Activated B cell treated with CpG ODN at 0.5 μM for 24 hours (primary cell): ENCODE measurements at regions of chr7 and their contacts with region 1.

Region 1: DNA sequence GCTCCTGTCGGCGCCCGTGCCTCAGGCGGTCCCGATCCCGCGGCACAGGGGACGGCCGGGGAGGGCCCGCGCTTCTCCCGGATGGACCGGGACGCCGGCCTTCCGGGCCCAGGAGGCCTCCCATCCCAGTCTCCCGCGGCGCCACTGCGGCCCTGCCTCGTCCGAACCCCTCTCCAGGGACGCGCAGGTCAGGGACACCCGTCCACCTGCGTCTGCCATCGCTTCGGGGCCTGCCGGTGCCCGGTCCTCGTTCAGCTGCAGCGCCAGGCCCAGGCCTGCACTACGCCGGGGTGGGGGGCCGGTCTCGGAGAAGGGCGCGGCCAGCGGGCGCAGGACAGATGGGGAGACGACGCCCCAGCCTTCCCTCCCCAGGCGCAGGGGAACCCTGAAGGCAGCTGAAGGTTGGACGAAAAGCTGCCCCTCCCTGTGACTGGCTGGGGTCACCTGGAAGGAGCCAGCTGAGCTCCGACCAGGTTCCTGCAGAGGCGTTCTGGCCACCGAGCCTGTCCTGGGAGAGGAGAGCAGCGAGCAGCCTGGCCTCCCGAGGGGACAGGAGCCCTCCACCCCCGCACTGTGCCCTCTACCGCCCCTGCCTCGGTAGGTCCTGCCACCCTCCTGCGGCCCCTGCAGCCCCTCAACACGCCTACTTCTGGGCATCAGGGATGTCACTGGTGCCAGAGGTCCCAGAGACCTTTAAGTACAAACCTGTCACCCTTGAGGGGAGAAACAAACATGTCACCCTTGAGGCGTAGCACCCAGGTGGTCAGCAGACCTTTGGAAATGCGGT is 84.3 kb downstream of the LANCL2 start:
- DNase-seq: no peak
- ATAC-seq: no peak
- H3K4me3 Mint-ChIP-seq: no peak overlapping the region
- H3K27ac Mint-ChIP-seq: no peak overlapping the region
- H3K4me1 Mint-ChIP-seq: peaks cover 8% of the 10 kb centered on the region
- H3K27me3 Mint-ChIP-seq: no peaks in the 10 kb centered on the region
- CTCF ChIP-seq: no peak

Region 2: GRCh38 chr7:55223023-55223422 is 226.4 kb before region 1 on chr7:
- CTCF ChIA-PET with region 1: no interaction called
- POLR2A ChIA-PET with region 1: no interaction called
- intact Hi-C with region 1: no loop called
- DNase-seq: no peak
- ATAC-seq: no peak
- H3K4me3 Mint-ChIP-seq: no peak overlapping the region
- H3K27ac Mint-ChIP-seq: no peak overlapping the region
- H3K4me1 Mint-ChIP-seq: no peaks in the 10 kb centered on the region
- H3K27me3 Mint-ChIP-seq: no peaks in the 10 kb centered on the region
- CTCF ChIP-seq: no peak

Region 3: GRCh38 chr7:55469271-55469681 is 19.9 kb after region 1 on chr7:
- CTCF ChIA-PET with region 1: no interaction called
- POLR2A ChIA-PET with region 1: no interaction called
- intact Hi-C with region 1: no loop called
- DNase-seq: no peak
- ATAC-seq: peak; percentile 41
- H3K4me3 Mint-ChIP-seq: no peak overlapping the region
- H3K27ac Mint-ChIP-seq: peak overlapping the region; percentile 21
- H3K4me1 Mint-ChIP-seq: peaks cover 24% of the 10 kb centered on the region
- H3K27me3 Mint-ChIP-seq: no peaks in the 10 kb centered on the region
- CTCF ChIP-seq: no peak

Region 4: DNA sequence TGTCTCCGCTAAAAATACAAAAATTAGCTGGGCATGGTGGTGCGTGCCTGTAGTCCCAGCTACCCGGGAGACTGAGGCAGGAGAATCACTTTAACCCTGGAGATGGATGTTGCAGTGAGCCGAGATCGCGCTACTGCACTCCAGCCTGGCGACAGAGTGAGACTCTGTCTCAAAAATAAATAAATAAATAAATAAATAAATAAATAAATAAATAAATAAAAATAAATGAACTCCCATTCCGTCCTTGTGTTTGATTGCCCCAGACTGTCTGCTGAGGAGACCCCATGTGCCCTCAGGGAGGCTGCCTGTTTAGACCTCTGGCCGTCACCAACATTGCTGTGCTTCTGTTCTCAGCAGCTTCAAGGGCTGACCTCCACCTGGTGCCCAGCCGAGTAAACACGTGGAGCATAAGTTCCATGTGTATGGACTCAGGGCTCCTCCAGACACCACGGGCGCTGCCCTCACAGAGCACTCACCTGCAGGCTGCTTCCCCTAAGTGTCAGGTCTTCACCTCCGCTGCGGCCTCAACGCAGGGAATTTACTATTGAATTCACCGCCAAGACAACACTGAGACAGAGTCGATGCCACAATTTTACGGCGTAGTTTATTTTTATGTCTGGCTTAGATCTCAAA is 90.9 kb after region 1 on chr7:
- CTCF ChIA-PET with region 1: no interaction called
- POLR2A ChIA-PET with region 1: no interaction called
- intact Hi-C with region 1: no loop called
- DNase-seq: no peak
- ATAC-seq: no peak
- H3K4me3 Mint-ChIP-seq: peak overlapping the region; percentile 55
- H3K27ac Mint-ChIP-seq: peak overlapping the region; percentile 75
- H3K4me1 Mint-ChIP-seq: peaks cover 87% of the 10 kb centered on the region
- H3K27me3 Mint-ChIP-seq: no peaks in the 10 kb centered on the region
- CTCF ChIP-seq: no peak

Region 5: DNA sequence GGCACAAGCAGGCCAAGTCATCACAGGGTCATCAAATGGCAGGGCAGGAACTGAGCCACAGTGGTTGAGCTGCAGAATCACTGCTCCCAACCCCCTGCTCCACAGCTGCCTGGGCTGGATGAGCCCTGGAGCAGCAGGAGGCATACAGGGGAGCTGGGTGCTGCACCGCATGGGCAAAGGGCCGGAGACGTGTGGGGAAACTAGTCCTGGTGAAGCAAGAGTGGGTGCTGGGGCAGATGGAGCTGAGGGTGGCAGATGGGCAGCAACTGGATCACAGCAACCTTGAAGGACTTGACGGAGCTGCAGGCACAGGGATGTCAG is 138.9 kb after region 1 on chr7:
- CTCF ChIA-PET with region 1: no interaction called
- POLR2A ChIA-PET with region 1: no interaction called
- intact Hi-C with region 1: loop called (anchors 5 kb)
- DNase-seq: no peak
- ATAC-seq: no peak
- H3K4me3 Mint-ChIP-seq: no peak overlapping the region
- H3K27ac Mint-ChIP-seq: no peak overlapping the region
- H3K4me1 Mint-ChIP-seq: peaks cover 34% of the 10 kb centered on the region
- H3K27me3 Mint-ChIP-seq: no peaks in the 10 kb centered on the region
- CTCF ChIP-seq: no peak